ENCODE measurements at regions of chr7 and their contacts with region 1.

Region 1: DNA sequence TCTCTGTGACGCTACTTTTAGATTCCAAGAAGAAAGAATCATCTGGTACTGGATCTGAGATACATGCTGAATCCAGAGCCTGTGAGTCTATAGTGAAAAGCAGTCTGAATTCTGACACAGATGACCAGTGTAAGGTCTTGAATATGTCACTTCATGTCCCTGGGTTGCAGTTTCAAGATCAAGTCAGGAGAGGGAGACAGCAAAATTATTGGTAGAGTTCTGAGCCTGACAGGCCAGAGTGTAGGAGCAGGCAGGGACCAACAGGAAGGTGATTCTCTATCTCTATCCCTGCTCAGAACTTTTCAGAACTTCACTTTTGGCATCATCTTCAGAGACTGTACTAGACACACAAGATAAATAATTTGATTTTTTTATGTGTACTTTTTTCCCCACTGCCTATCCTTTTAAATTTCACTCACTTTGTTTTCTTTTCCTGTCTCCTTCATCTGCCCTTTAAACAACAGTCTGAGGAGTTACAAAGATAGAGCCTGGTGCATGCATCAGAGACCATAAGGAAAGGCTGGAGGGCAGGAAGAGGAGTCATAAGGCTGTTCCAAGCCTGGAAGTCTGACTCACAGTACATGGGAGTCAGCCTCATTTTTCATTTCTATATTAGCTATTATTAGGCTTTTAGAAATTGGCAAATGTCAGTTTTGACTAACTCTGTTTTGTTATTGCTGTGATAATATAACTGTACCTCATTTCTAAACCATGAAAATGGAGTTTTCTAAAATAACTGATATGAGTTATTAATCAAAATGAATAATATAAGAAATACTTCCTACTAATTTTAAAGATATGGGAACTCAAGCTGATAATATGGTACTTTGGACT is 120.2 kb upstream of the TMEM229A start:
- DNase-seq: no peak
- H3K4me3 ChIP-seq: no peak overlapping the region
- CTCF ChIP-seq: peak; percentile 52

Region 2: GRCh38 chr7:124113045-124113444 is 40.0 kb before region 1 on chr7:
- in situ Hi-C with region 1: no loop called
- DNase-seq: no peak
- H3K4me3 ChIP-seq: no peak overlapping the region
- CTCF ChIP-seq: no peak

Region 3: GRCh38 chr7:124779194-124779593 is 626.1 kb after region 1 on chr7:
- in situ Hi-C with region 1: loop called (anchors 10 kb)
- DNase-seq: no peak
- H3K4me3 ChIP-seq: no peak overlapping the region
- CTCF ChIP-seq: no peak